ENCODE measurements at regions of chr18 and their contacts with region 1.

Region 1: GRCh38 chr18:36688020-36688965 is 140.5 kb downstream of the TPGS2 start:
- DNase-seq: no peak
- ATAC-seq: peak; percentile 81
- H3K4me3 ChIP-seq: no peak overlapping the region
- H3K27ac ChIP-seq: no peak overlapping the region
- H3K4me1 ChIP-seq: no peaks in the 10 kb centered on the region
- H3K27me3 ChIP-seq: no peaks in the 10 kb centered on the region

Region 2: DNA sequence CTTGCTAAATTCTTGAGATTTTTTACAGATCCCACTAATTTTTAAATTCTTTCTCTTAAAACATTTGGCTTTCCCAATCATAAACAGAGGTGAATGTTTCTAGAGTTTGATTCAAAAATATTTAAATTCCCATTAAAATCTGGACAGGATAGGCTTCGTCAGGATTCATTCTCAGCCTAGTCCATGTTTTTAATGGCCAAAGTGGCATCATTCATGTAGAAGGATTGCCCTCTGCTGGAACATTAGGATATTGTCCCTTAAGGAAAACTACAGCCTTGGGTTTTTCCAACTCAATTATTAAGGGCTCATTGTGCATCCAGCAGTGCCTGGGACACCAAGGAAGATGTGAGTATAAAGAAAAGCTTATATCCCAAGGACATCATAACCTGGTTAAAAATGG is 68.8 kb after region 1 on chr18:
- intact Hi-C with region 1: loop called (anchors 5 kb)
- DNase-seq: no peak
- ATAC-seq: no peak
- H3K4me3 ChIP-seq: no peak overlapping the region
- H3K27ac ChIP-seq: no peak overlapping the region
- H3K4me1 ChIP-seq: no peaks in the 10 kb centered on the region
- H3K27me3 ChIP-seq: no peaks in the 10 kb centered on the region

Measured in aorta (tissue), 5 donors.